MCF 10A (cell line): ENCODE measurements at regions of chr4 and their contacts with region 1.

Region 1: DNA sequence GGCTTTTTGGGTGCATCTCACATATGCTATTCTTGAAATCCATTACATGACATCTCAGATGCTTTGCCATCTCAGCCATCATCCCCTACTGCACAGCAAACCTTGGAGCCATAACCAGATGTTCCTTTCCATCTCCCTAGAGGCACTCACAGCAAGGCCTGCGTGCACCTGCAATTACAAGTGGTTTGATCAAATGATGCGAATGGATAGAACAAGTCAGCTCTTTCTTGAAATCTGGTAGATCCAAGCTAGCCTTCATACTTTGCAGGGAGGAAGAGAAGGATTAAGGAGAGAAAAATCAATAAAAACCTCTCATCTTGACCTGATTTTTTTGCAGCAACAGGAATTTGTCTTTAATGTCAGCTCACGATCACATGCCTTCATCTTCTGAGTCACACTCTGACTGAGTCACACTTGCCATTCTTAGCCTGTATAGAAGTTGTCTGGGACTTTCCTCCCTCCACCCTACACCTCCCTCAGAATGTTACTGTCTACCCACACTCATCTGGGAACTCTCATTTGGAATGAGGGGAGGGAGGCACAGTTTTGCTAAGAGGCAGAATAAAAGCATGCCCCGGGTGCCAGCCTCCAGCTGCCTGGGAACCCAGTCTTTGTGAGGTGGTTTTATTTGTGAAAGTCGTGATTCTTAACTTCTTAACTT is 11.9 kb upstream of the TRIML1 start:
- DNase-seq: peak; percentile 88
- H3K4me3 Mint-ChIP-seq: no peak overlapping the region
- H3K27ac Mint-ChIP-seq: peak overlapping the region; percentile 83
- H3K4me1 Mint-ChIP-seq: peaks cover 13% of the 10 kb centered on the region
- H3K27me3 Mint-ChIP-seq: no peaks in the 10 kb centered on the region
- CTCF ChIP-seq: no peak

Region 2: GRCh38 chr4:188015025-188015778 is 112.1 kb before region 1 on chr4:
- CTCF ChIA-PET with region 1: no interaction called
- POLR2A ChIA-PET with region 1: no interaction called
- intact Hi-C with region 1: loop called (anchors 2 kb)
- DNase-seq: peak; percentile 68
- H3K4me3 Mint-ChIP-seq: no peak overlapping the region
- H3K27ac Mint-ChIP-seq: peak overlapping the region; percentile 91
- H3K4me1 Mint-ChIP-seq: peaks cover 35% of the 10 kb centered on the region
- H3K27me3 Mint-ChIP-seq: no peaks in the 10 kb centered on the region
- CTCF ChIP-seq: no peak

Region 3: GRCh38 chr4:188232428-188232827 is 105.1 kb after region 1 on chr4:
- CTCF ChIA-PET with region 1: no interaction called
- POLR2A ChIA-PET with region 1: no interaction called
- intact Hi-C with region 1: no loop called
- DNase-seq: no peak
- H3K4me3 Mint-ChIP-seq: no peak overlapping the region
- H3K27ac Mint-ChIP-seq: no peak overlapping the region
- H3K4me1 Mint-ChIP-seq: no peaks in the 10 kb centered on the region
- H3K27me3 Mint-ChIP-seq: no peaks in the 10 kb centered on the region
- CTCF ChIP-seq: no peak